ENCODE measurements at regions of chr15 and their contacts with region 1.

Region 1: DNA sequence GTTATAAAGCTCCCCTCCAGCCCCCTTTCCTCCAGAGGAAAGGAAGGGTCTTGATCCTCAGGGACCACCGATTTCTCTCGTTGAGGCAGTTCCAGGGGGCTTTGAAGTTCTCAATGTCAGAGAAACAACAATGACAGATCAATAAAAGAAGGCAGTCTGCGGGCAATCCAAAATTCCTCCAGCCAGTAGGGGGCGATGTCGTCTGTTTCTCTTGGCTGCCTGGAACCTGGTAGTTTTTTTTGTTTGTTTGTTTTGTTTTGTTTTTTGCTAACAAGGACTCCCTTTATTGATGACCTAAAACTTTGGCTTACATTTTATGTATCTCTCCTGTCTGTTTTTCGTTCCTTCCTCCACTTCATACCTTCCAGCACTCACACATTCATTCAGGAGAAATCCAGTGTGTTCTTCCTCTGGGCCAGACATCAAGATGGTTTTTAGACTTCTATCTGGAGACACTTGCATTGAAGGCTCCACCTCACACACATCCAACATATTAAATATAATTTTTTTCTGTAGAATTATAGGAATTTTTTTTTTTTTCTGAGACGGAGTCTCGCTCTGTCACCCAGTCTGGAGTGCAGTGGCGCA is 276.6 kb downstream of the RPLP1 start:
- DNase-seq: peak in 2 of 3 donors; percentile 48 to 58
- H3K4me3 ChIP-seq: no peak overlapping the region
- H3K4me3 Mint-ChIP-seq: no peak overlapping the region
- H3K27ac ChIP-seq: no peak overlapping the region
- H3K27ac Mint-ChIP-seq: peak overlapping the region in 6 of 7 donors; percentile 47 to 76 (median 66)
- H3K4me1 ChIP-seq: peaks cover 50 to 52% of the 10 kb centered on the region in 2 donors
- H3K4me1 Mint-ChIP-seq: peaks cover 58% of the 10 kb centered on the region
- H3K27me3 ChIP-seq: no peaks in the 10 kb centered on the region
- H3K27me3 Mint-ChIP-seq: peaks cover 0 to 4% (median 0%) of the 10 kb centered on the region in 3 donors
- CTCF ChIP-seq: peak; percentile 80

Region 2: DNA sequence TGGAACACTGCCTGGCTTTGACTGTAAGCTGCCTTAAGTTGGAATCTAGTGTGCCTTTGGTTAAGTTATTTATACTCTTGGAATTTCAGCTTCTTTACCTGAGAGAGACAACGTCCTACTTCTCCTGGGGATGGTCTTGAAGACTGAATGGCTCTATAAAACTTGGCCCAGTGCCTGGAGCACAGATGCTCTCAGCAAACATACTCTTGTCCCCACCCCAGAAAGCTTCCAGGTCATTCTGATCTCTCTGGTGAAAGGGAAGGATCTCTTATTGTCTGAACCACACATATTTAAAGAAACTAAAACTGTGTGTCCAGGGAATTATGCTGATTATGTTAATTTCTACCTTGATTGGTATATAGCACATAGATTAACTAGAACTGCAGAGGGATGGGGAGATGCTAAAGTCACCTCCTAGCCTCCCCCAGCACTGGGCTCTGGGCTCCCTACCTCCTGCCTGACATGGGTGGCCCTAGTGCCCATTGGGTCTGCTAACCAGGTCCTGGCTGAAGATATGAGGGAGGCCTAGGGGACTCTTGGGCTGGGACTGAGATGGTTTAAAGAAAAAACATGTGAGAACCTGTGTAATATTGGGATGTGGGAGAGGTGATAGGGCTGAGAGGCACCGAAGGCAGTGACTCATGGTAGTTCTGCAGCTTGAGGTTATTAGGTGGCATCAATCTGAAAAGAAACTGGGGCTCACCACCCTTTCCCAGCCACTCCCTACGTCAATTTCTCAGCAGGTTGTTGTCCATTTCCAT is 105.7 kb before region 1 on chr15:
- intact Hi-C with region 1: no loop called
- DNase-seq: peak in 1 of 3 donors; percentile 18
- H3K4me3 ChIP-seq: no peak overlapping the region
- H3K4me3 Mint-ChIP-seq: no peak overlapping the region
- H3K27ac ChIP-seq: peak overlapping the region in 1 of 2 donors; percentile 10
- H3K27ac Mint-ChIP-seq: peak overlapping the region in 4 of 7 donors; percentile 1 to 79 (median 36)
- H3K4me1 ChIP-seq: peaks cover 38 to 44% of the 10 kb centered on the region in 2 donors
- H3K4me1 Mint-ChIP-seq: peaks cover 48% of the 10 kb centered on the region
- H3K27me3 ChIP-seq: no peaks in the 10 kb centered on the region
- H3K27me3 Mint-ChIP-seq: peaks cover 2 to 8% (median 2%) of the 10 kb centered on the region in 3 donors
- CTCF ChIP-seq: no peak

Region 3: GRCh38 chr15:69766141-69766540 is 36.9 kb after region 1 on chr15:
- intact Hi-C with region 1: no loop called
- DNase-seq: no peak
- H3K4me3 ChIP-seq: no peak overlapping the region
- H3K4me3 Mint-ChIP-seq: no peak overlapping the region
- H3K27ac ChIP-seq: no peak overlapping the region
- H3K27ac Mint-ChIP-seq: peak overlapping the region in 2 of 7 donors; percentile 46 to 85
- H3K4me1 ChIP-seq: peaks cover 34 to 49% of the 10 kb centered on the region in 2 donors
- H3K4me1 Mint-ChIP-seq: peaks cover 42% of the 10 kb centered on the region
- H3K27me3 ChIP-seq: no peaks in the 10 kb centered on the region
- H3K27me3 Mint-ChIP-seq: peaks cover 2 to 4% (median 3%) of the 10 kb centered on the region in 3 donors
- CTCF ChIP-seq: no peak

Region 4: GRCh38 chr15:69807755-69808154 is 78.5 kb after region 1 on chr15:
- intact Hi-C with region 1: loop called in 1 of 2 experiments (anchors 5 kb)
- DNase-seq: peak; percentile 76 to 90 (median 82)
- H3K4me3 ChIP-seq: no peak overlapping the region
- H3K4me3 Mint-ChIP-seq: no peak overlapping the region
- H3K27ac ChIP-seq: peak overlapping the region in 1 of 2 donors; percentile 76
- H3K27ac Mint-ChIP-seq: peak overlapping the region; percentile 77 to 92 (median 83)
- H3K4me1 ChIP-seq: peaks cover 39 to 49% of the 10 kb centered on the region in 2 donors
- H3K4me1 Mint-ChIP-seq: peaks cover 46% of the 10 kb centered on the region
- H3K27me3 ChIP-seq: no peaks in the 10 kb centered on the region
- H3K27me3 Mint-ChIP-seq: peaks cover 13 to 17% (median 14%) of the 10 kb centered on the region in 3 donors
- CTCF ChIP-seq: no peak

Measured in CD14-positive monocyte (primary cell).